Activated CD8-positive, alpha-beta memory T cell treated with anti-CD3 and anti-CD28 coated beads, Interleukin-2, amount 10 ng/mL, durations not matched to agents 7 days and 5 days (primary cell): ENCODE measurements at regions of chr1 and their contacts with region 1.

Region 1: DNA sequence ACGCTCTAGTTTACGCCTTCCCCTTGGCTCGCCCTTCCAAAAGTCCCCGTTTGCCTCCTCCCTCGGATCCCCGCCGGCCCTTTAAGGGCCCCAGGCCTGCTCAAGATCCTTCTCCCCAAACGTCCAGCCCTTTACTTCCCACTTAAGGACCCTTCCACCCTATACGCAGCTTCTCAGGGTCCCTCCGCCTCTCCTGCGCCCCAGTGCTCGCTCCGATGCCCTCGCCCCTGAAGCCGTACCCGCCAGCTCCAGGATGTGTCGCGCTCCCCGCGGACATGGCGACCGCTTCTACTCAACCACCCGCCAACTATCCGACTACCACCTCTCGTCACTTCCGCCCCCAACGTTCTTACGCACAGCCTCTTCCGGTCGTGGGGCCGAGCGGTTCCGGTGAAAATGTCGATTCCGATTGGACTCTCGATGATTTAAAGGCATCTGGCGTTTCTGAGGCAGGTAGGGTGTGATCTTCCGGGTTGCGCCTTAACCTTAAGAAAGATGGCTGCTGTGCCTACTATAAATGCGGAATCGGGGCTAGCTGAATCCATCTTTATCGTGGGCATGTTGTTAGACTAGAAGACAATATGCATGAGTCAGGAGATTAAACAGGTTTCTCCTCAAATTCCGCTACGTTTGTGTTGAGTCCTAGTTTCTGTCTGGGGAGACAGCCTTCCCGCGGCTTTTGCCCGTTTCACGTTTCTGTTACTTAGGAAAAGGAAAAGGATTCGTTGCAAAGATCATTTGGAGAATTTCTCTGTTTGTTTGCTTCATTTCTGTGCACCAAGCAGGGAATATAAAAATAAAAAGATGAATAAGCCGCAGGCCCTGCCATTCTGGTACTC is at the start of gene KHDC4:
- DNase-seq: peak; percentile 98
- ATAC-seq: peak; percentile 96
- H3K4me3 Mint-ChIP-seq: no peak within 1 kb of the TSS
- H3K27ac Mint-ChIP-seq: no peak within 1 kb of the TSS
- H3K4me1 Mint-ChIP-seq: peaks cover 45% of the 10 kb centered on the region
- H3K27me3 Mint-ChIP-seq: no peaks in the 10 kb centered on the region
- total RNA-seq, gene KHDC4: 80.2 to 99.4 TPM

Region 2: GRCh38 chr1:155946633-155947219 is 12.4 kb after region 1 on chr1:
- CTCF ChIA-PET with region 1: interaction called, 16 read pairs
- DNase-seq: no peak
- ATAC-seq: peak; percentile 17
- H3K4me3 Mint-ChIP-seq: peak overlapping the region; percentile 31
- H3K27ac Mint-ChIP-seq: peak overlapping the region; percentile 82
- H3K4me1 Mint-ChIP-seq: peaks cover 46% of the 10 kb centered on the region
- H3K27me3 Mint-ChIP-seq: no peaks in the 10 kb centered on the region

Region 3: DNA sequence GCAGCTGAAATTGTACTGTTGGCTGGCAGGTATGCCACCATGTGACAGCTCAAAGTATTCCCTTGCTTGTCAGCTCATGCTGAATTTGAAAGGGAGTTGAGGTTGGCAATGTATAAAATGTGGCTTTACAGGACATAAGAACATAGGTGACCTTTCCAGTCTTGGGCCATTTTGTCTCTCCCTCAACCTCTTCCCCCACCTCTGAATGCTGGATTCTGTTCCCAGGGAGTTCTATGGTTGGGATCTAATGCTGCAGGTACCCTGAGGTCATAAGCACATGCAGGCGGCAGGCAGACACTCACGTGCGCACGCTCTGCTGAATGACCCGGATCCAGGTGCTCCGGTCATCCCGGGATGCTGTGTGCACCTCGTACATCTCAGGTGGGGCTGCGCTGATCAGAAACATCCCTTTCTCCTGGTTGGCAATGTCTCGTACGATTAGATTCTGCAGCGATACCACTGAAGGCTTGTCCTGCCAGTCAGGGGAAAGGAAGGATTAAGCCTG is 23.1 kb after region 1 on chr1:
- CTCF ChIA-PET with region 1: interaction called, 14 read pairs
- DNase-seq: no peak
- ATAC-seq: no peak
- H3K4me3 Mint-ChIP-seq: no peak overlapping the region
- H3K27ac Mint-ChIP-seq: peak overlapping the region; percentile 35
- H3K4me1 Mint-ChIP-seq: peaks cover 11% of the 10 kb centered on the region
- H3K27me3 Mint-ChIP-seq: no peaks in the 10 kb centered on the region

Region 4: DNA sequence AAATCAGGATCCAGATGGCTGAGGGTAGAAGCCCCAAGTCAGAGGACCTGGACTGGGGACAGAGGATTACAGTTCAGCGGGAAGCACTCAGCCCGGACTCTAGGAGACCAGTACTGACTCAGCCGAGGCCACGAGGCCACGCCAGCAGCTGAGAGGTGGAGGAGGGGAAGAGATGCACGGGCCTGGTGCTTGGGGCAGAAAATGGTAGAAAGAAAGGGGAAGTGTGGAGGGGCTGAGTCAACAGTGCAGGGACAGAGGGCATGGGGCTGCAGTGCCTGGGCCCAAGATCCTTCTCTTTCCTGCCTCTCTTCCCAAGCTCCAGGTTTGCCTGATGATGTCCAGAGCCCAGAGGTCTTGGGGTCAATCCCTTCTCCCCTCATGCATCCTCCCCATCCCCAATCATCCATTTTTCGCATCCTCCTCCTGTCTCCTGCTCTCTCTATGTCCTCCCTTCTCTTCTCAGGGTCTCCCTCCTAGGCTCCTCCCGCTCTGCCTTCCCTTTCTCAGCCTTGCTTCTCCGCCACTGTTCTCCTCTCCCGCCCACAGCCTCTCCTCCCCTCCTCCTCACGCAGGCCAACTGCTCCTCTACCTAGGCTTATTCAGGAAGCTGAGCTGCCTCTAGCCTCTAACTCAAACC is 36.3 kb after region 1 on chr1:
- CTCF ChIA-PET with region 1: interaction called, 119 read pairs
- DNase-seq: peak; percentile 58
- ATAC-seq: peak; percentile 48
- H3K4me3 Mint-ChIP-seq: peak overlapping the region; percentile 3
- H3K27ac Mint-ChIP-seq: peak overlapping the region; percentile 86
- H3K4me1 Mint-ChIP-seq: peaks cover 84% of the 10 kb centered on the region
- H3K27me3 Mint-ChIP-seq: no peaks in the 10 kb centered on the region

Region 5: DNA sequence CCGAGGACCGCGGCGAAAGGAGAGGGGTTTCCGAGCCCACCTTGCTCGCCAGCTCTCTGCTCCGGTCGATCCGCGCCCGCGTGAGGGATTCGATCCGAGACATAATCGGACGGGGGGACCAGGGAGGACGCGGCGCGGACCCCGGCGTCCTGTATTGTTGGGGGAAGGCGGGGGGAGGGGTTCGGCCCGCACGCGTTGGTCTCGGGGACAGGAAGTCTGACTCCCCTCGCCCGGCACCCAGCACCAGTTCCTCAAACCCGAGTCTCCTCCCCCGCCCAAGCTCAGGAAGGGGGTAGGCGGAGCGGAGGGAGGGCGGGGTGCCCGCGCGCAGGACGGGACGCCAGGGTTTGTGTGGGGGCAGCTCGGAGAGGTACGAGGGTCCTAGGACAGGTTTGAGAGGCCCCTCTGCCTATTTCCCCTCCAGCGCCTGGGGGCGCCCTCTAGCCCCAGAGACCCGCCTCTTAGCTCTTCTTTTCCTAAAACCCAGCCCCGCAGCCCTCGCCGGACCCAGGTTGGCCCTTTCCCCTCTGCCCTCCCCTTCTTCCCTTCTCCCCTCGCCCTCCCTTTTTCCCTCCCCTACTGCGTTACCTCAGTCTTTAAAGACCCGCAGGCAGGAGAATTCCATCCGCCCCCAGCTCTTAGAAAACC is 44.1 kb after region 1 on chr1 and contains the start of gene ARHGEF2:
- CTCF ChIA-PET with region 1: interaction called, 119 read pairs
- DNase-seq: peak; percentile 91
- ATAC-seq: peak; percentile 80
- H3K4me3 Mint-ChIP-seq: peak within 1 kb of the TSS; percentile 98
- H3K27ac Mint-ChIP-seq: peak within 1 kb of the TSS; percentile 92
- H3K4me1 Mint-ChIP-seq: peaks cover 62% of the 10 kb centered on the region
- H3K27me3 Mint-ChIP-seq: no peaks in the 10 kb centered on the region
- total RNA-seq, gene ARHGEF2: 159 to 161 TPM

Region 6: DNA sequence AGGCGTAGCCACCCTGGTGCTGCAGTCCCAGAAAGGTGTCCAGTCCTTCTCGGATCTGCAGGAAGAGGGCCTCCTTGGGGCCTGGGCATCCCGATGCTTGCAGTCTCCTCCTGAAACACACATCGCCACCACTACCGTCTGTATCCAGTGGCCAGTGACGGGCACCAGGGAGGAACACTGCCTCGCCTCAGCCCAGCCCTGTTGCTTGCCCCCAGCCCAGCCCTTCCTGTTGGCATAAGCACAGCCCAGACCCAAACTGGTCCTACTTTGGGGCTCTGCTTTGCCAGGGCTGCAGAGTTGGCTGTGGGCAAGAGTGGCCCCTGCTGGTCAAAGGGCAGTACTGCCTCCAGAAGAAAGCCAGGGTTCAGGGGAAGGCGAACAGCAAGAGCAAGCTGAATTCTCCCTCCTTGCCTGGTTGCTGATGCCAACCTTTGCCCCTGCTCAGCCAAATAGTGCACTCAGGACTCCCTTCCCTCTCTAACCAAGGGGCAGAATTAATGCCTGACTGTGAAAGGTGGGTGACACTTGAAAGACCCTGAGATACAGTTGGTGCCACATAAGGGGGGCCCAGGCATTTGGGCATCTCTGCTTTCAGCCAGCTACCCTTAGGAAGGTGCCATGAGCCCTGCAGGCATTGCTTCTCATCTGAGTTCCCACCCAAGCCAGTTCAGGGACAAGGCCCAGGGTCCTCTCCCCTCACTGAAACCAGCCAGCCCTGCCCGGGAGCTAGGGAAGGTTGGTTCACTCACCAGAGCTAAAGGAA is 55.1 kb after region 1 on chr1:
- CTCF ChIA-PET with region 1: interaction called, 119 read pairs
- DNase-seq: peak; percentile 87
- ATAC-seq: peak; percentile 94
- H3K4me3 Mint-ChIP-seq: no peak overlapping the region
- H3K27ac Mint-ChIP-seq: peak overlapping the region; percentile 66
- H3K4me1 Mint-ChIP-seq: peaks cover 26% of the 10 kb centered on the region
- H3K27me3 Mint-ChIP-seq: no peaks in the 10 kb centered on the region

Region 7: DNA sequence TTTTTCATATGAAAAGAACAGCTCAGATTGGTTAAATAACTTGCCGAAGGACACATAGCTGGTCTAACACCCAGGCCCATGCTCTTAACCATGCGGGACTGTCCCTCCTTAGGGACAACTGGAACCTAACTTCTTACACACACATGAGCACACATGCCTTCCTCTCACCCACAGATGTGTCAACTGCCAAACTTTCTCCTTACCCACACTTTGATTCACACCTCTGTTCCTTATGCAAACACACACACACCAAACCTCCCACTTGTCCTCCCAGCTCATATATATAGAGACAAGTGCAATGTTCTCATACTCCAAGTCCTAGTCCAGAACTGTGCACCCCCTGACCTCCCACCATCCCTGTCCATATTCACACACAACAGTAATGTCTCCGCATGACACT is 130.9 kb after region 1 on chr1:
- CTCF ChIA-PET with region 1: interaction called, 24 read pairs
- DNase-seq: no peak
- ATAC-seq: no peak
- H3K4me3 Mint-ChIP-seq: no peak overlapping the region
- H3K27ac Mint-ChIP-seq: peak overlapping the region; percentile 2
- H3K4me1 Mint-ChIP-seq: peaks cover 18% of the 10 kb centered on the region
- H3K27me3 Mint-ChIP-seq: no peaks in the 10 kb centered on the region